ENCODE measurements at regions of chr16 and their contacts with region 1.

Region 1: DNA sequence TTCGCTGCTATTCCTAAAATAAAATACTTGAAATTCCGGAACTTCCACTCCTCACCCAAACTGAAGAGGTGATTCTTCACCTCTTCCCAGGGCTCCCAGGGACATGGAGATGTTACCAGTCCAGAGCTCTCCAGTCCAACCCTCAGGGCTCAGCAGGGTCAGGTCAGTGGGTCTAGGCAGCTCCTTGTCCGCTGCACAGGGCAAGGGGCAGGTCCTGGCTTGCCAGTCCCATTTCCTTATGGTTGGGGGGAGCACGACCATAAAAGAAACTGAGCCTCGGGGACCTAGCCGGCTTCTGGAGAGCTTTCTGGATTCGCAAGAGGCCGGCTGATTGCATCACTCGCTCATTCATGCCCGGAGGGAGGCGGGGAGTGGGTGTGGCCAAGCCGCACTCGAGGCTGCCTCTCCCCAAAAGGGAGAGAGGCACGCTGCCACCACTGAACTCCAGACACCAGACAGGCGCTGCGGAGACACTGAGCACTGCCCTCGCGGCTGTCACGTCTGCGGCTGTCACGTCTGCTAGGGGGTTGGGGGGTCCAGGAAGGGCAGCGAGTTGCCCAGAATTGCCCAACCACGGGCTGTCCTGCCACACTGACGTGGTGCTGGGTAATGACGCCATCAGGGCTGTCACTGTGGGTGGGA is 15.8 kb downstream of the SLC7A5 start:
- DNase-seq: peak; percentile 57
- ATAC-seq: peak; percentile 78
- H3K4me3 ChIP-seq: peak overlapping the region; percentile 8; the same call in 1 of the 2 replicates
- H3K27ac ChIP-seq: peak overlapping the region; percentile 67
- H3K4me1 ChIP-seq: peaks cover 42% of the 10 kb centered on the region
- H3K27me3 ChIP-seq: no peaks in the 10 kb centered on the region
- CTCF ChIP-seq: no peak
- EP300 ChIP-seq: no peak
- POLR2A ChIP-seq: peak; percentile 93
- RAD21 ChIP-seq: no peak

Region 2: GRCh38 chr16:87027056-87027616 is 826.4 kb before region 1 on chr16:
- CTCF ChIA-PET with region 1: no interaction called
- POLR2A ChIA-PET with region 1: no interaction called
- RAD21 ChIA-PET with region 1: no interaction called
- SMC1A ChIA-PET with region 1: no interaction called
- in situ Hi-C with region 1: no loop called
- intact Hi-C with region 1: no loop called
- DNase-seq: no peak
- ATAC-seq: no peak
- H3K4me3 ChIP-seq: no peak overlapping the region
- H3K27ac ChIP-seq: no peak overlapping the region
- H3K4me1 ChIP-seq: no peaks in the 10 kb centered on the region
- H3K27me3 ChIP-seq: no peaks in the 10 kb centered on the region
- CTCF ChIP-seq: no peak
- EP300 ChIP-seq: no peak
- POLR2A ChIP-seq: no peak
- RAD21 ChIP-seq: no peak

Region 3: GRCh38 chr16:87806603-87807546 is 46.7 kb before region 1 on chr16:
- CTCF ChIA-PET with region 1: interaction called, 16 read pairs
- POLR2A ChIA-PET with region 1: no interaction called
- RAD21 ChIA-PET with region 1: interaction called, 14 read pairs
- SMC1A ChIA-PET with region 1: interaction called, 11 read pairs
- in situ Hi-C with region 1: no loop called
- intact Hi-C with region 1: loop called (anchors 5 kb)
- DNase-seq: no peak
- ATAC-seq: peak; percentile 17
- H3K4me3 ChIP-seq: peak overlapping the region; percentile 24; the same call in 1 of the 2 replicates
- H3K27ac ChIP-seq: peak overlapping the region; percentile 78
- H3K4me1 ChIP-seq: peaks cover 58% of the 10 kb centered on the region
- H3K27me3 ChIP-seq: no peaks in the 10 kb centered on the region
- CTCF ChIP-seq: no peak
- EP300 ChIP-seq: no peak
- POLR2A ChIP-seq: peak; percentile 22
- RAD21 ChIP-seq: no peak

Region 4: DNA sequence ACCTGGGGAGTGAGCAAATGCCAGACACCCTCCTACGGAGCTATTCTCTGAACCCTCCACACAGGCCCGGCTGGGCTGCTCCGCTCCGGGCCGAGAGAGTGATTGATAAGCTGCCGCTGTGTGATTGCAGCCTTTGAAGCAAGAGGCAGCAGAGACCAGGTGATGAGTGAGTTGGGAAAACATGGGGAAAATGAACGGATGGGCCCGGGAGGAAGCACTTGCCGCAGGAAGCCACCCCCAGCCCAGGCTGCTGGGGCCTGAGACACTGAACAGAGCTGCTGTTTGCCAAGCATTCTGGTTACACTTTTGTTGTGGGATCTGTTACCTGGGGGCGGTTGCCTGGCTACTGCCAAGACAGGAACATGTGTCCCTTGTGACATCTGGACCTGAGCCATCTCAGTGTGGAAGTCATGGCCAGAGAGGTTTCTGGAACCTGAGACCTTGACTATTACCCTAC is 41.3 kb before region 1 on chr16:
- CTCF ChIA-PET with region 1: interaction called, 16 read pairs
- POLR2A ChIA-PET with region 1: no interaction called
- RAD21 ChIA-PET with region 1: interaction called, 14 read pairs
- SMC1A ChIA-PET with region 1: interaction called, 11 read pairs
- in situ Hi-C with region 1: no loop called
- intact Hi-C with region 1: loop called (anchors 5 kb)
- DNase-seq: no peak
- ATAC-seq: no peak
- H3K4me3 ChIP-seq: no peak overlapping the region
- H3K27ac ChIP-seq: no peak overlapping the region
- H3K4me1 ChIP-seq: peaks cover 38% of the 10 kb centered on the region
- H3K27me3 ChIP-seq: no peaks in the 10 kb centered on the region; a peak in 1 of 4 replicates
- CTCF ChIP-seq: no peak
- EP300 ChIP-seq: no peak
- POLR2A ChIP-seq: no peak
- RAD21 ChIP-seq: no peak

Region 5: GRCh38 chr16:87877938-87878507 is 24.5 kb after region 1 on chr16:
- CTCF ChIA-PET with region 1: interaction called, 213 read pairs
- POLR2A ChIA-PET with region 1: no interaction called
- RAD21 ChIA-PET with region 1: interaction called, 102 read pairs
- SMC1A ChIA-PET with region 1: interaction called, 122 read pairs
- in situ Hi-C with region 1: no loop called
- intact Hi-C with region 1: no loop called
- DNase-seq: no peak
- ATAC-seq: peak; percentile 57
- H3K4me3 ChIP-seq: no peak overlapping the region
- H3K27ac ChIP-seq: no peak overlapping the region
- H3K4me1 ChIP-seq: peaks cover 6% of the 10 kb centered on the region
- H3K27me3 ChIP-seq: no peaks in the 10 kb centered on the region; a peak in 1 of 4 replicates
- CTCF ChIP-seq: peak; percentile 29 to 41 (median 34); a peak in 4 of 6 replicates
- EP300 ChIP-seq: no peak
- POLR2A ChIP-seq: no peak
- RAD21 ChIP-seq: peak; percentile 44

Region 6: GRCh38 chr16:87914812-87915211 is 61.3 kb after region 1 on chr16:
- CTCF ChIA-PET with region 1: interaction called, 17 read pairs
- POLR2A ChIA-PET with region 1: interaction called, 3 read pairs
- RAD21 ChIA-PET with region 1: interaction called, 3 read pairs
- SMC1A ChIA-PET with region 1: no interaction called
- in situ Hi-C with region 1: no loop called
- intact Hi-C with region 1: no loop called
- DNase-seq: no peak
- ATAC-seq: no peak
- H3K4me3 ChIP-seq: no peak overlapping the region
- H3K27ac ChIP-seq: no peak overlapping the region
- H3K4me1 ChIP-seq: no peaks in the 10 kb centered on the region
- H3K27me3 ChIP-seq: no peaks in the 10 kb centered on the region
- CTCF ChIP-seq: no peak
- EP300 ChIP-seq: no peak
- POLR2A ChIP-seq: no peak
- RAD21 ChIP-seq: no peak

Region 7: GRCh38 chr16:87963400-87963799 is 109.9 kb after region 1 on chr16:
- CTCF ChIA-PET with region 1: no interaction called
- POLR2A ChIA-PET with region 1: no interaction called
- RAD21 ChIA-PET with region 1: no interaction called
- SMC1A ChIA-PET with region 1: no interaction called
- in situ Hi-C with region 1: no loop called
- intact Hi-C with region 1: no loop called
- DNase-seq: no peak
- ATAC-seq: peak; percentile 46
- H3K4me3 ChIP-seq: no peak overlapping the region
- H3K27ac ChIP-seq: no peak overlapping the region
- H3K4me1 ChIP-seq: peaks cover 5% of the 10 kb centered on the region
- H3K27me3 ChIP-seq: no peaks in the 10 kb centered on the region
- CTCF ChIP-seq: no peak
- EP300 ChIP-seq: no peak
- POLR2A ChIP-seq: no peak
- RAD21 ChIP-seq: no peak

Region 8: DNA sequence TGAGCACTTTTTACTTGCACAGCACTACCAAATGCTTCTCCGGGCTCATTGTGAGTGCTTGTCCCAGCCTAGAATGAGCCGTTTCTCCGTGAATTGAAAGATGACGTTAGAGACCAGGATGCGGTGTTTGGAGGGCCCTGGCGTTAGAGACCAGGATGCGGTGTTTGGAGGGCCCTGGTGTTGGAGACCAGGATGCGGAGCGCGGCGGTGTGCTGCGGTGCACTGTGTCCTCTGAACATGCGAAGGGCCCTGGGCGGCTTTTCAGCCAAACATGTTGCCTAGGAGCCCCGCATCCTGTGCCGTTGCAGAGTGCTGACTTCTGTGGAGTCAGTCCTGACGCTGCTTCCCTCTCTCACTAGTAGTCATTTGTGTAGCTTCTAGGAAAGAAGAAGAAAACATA is 140.4 kb after region 1 on chr16:
- CTCF ChIA-PET with region 1: no interaction called
- POLR2A ChIA-PET with region 1: no interaction called
- RAD21 ChIA-PET with region 1: no interaction called
- SMC1A ChIA-PET with region 1: no interaction called
- in situ Hi-C with region 1: no loop called
- intact Hi-C with region 1: no loop called
- DNase-seq: no peak
- ATAC-seq: no peak
- H3K4me3 ChIP-seq: no peak overlapping the region
- H3K27ac ChIP-seq: no peak overlapping the region
- H3K4me1 ChIP-seq: no peaks in the 10 kb centered on the region
- H3K27me3 ChIP-seq: no peaks in the 10 kb centered on the region
- CTCF ChIP-seq: no peak
- EP300 ChIP-seq: no peak
- POLR2A ChIP-seq: no peak
- RAD21 ChIP-seq: no peak

Region 9: GRCh38 chr16:88282225-88283018 is 428.9 kb after region 1 on chr16:
- CTCF ChIA-PET with region 1: no interaction called
- POLR2A ChIA-PET with region 1: no interaction called
- RAD21 ChIA-PET with region 1: no interaction called
- SMC1A ChIA-PET with region 1: no interaction called
- in situ Hi-C with region 1: no loop called
- intact Hi-C with region 1: no loop called
- DNase-seq: no peak
- ATAC-seq: no peak
- H3K4me3 ChIP-seq: no peak overlapping the region
- H3K27ac ChIP-seq: no peak overlapping the region
- H3K4me1 ChIP-seq: no peaks in the 10 kb centered on the region
- H3K27me3 ChIP-seq: no peaks in the 10 kb centered on the region
- CTCF ChIP-seq: no peak
- EP300 ChIP-seq: no peak
- POLR2A ChIP-seq: no peak
- RAD21 ChIP-seq: no peak